KBM-7 (cell line): ENCODE measurements at regions of chr1 and their contacts with region 1.

Region 1: DNA sequence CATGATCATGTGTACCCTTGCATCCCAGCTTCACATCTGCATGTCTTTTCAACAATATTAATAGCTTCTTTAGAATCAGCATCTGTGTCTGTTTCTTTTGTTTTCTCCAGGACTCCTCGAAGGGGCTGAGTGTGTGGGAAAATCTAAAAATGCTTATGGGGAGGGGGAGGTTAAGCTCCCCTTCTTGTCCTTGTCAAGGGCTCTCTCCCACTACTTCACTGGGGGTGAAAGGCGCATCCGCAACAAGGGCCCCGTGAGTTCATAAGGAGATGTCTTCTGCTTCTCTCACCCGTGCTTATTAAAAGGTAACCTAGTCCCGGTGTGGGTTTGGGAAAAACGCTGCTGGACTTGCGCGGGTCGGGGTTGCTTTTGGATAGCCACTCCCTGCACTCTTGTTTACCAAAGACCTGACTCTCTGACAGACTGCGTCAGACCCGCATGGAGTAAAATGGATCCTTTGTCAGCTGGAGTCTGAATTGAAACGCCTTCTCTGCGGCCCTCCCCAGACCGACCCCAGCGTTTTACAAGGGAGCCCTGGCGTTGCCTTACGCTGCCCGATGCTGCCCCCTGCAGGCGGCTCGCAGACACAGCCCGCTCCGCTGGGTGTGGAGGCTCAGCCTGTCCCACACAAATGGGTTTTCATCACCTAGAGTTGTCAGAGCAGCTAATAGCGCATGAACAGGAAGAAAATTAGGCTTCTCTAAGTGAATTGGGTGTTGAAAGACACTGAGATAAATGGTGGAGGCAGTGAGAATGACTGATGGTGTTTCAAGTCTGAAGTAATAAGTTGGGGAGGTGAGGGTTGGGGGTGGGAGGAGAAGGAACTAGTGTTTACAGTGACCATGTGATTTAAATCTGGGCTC is 53.8 kb downstream of the IER5 start:
- DNase-seq: peak; percentile 86

Region 2: GRCh38 chr1:181089677-181090409 is 52.5 kb before region 1 on chr1:
- in situ Hi-C with region 1: loop called (anchors 10 kb)
- DNase-seq: peak; percentile 83